ENCODE measurements at regions of chr22 and their contacts with region 1.

Region 1: GRCh38 chr22:24583221-24584165 is 9.4 kb downstream of the LRRC75B start:
- DNase-seq: no peak
- ATAC-seq: no peak
- H3K4me3 ChIP-seq: no peak overlapping the region
- H3K27ac ChIP-seq: no peak overlapping the region
- H3K4me1 ChIP-seq: peaks cover 0 to 17% of the 10 kb centered on the region in 2 experiments; a peak in 2 of 5 replicates
- H3K27me3 ChIP-seq: no peaks in the 10 kb centered on the region
- CTCF ChIP-seq: no peak
- EP300 ChIP-seq: no peak
- POLR2A ChIP-seq: no peak
- RAD21 ChIP-seq: no peak

Region 2: GRCh38 chr22:24566899-24567511 is 16.5 kb before region 1 on chr22:
- CTCF ChIA-PET with region 1: no interaction called
- POLR2A ChIA-PET with region 1: interaction called, 10 read pairs
- in situ Hi-C with region 1: no loop called
- intact Hi-C with region 1: no loop called
- DNase-seq: no peak
- ATAC-seq: no peak
- H3K4me3 ChIP-seq: no peak overlapping the region
- H3K27ac ChIP-seq: no peak overlapping the region
- H3K4me1 ChIP-seq: peaks cover 0 to 4% of the 10 kb centered on the region in 2 experiments; a peak in 1 of 5 replicates
- H3K27me3 ChIP-seq: no peaks in the 10 kb centered on the region
- CTCF ChIP-seq: no peak
- EP300 ChIP-seq: no peak
- POLR2A ChIP-seq: no peak
- RAD21 ChIP-seq: no peak

Measured in K562 (cell line).